K562 (cell line): ENCODE measurements at regions of chr3 and their contacts with region 1.

Region 1: DNA sequence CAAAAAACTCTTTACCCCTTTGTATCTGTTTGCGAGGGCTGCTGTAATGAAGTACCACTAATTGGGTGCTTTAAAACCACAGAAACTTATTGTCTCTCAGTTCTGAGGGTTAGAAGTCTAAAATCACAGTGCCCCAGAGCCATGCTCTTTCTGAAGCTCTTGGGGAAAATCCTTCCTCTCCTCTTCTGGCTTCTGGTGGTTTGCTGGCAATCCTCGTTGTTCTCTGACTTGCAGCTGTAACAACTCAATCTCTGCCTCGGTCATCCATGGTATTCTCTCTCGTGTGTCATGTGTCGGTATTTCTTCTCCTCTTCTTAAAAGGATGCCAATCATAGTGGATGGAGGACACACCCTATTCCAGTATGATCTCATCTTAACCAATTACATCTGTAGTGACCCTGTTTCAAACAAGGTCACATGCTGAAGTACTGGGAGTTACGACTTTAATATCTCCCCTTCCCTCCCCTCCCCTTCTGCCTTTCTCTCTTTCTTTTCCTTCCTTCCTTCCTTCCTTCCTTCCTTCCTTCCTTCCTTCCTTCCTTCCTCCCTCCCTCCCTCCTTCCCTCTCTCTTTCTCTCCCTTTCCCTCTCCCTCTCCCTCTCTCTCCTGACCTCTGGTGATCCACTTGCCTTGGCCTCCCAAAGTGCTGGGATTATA is 6.5 kb upstream of the ARL8B start:
- DNase-seq: no peak
- ATAC-seq: peak; percentile 76
- H3K4me3 ChIP-seq: no peak overlapping the region
- H3K27ac ChIP-seq: no peak overlapping the region
- H3K4me1 ChIP-seq: peaks cover 0 to 3% of the 10 kb centered on the region in 2 experiments; a peak in 2 of 5 replicates
- H3K27me3 ChIP-seq: no peaks in the 10 kb centered on the region
- CTCF ChIP-seq: no peak
- EP300 ChIP-seq: no peak
- POLR2A ChIP-seq: no peak
- RAD21 ChIP-seq: no peak

Region 2: DNA sequence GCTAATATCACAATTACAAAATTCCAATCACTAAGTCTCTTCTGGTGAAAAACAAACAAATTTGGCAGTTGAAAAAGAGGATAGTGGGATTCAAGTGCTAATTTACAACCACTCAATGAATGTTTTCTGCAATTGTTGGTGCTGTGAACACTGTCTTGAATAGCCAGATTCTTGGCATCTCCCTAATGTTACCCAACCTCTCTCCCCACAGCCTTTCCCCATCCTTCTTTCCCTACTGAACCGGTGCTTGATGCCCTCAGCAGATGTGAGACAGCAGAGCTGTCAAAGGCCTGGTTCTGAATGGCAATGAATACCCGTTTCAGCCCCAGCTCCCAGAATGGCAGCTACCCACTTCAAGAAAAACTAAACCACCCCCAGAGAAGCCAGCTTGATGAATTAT is 158.9 kb before region 1 on chr3:
- CTCF ChIA-PET with region 1: no interaction called
- POLR2A ChIA-PET with region 1: no interaction called
- in situ Hi-C with region 1: no loop called
- intact Hi-C with region 1: no loop called
- DNase-seq: no peak
- ATAC-seq: no peak
- H3K4me3 ChIP-seq: no peak overlapping the region
- H3K27ac ChIP-seq: no peak overlapping the region
- H3K4me1 ChIP-seq: no peaks in the 10 kb centered on the region
- H3K27me3 ChIP-seq: no peaks in the 10 kb centered on the region
- CTCF ChIP-seq: no peak
- EP300 ChIP-seq: no peak
- POLR2A ChIP-seq: no peak
- RAD21 ChIP-seq: no peak

Region 3: DNA sequence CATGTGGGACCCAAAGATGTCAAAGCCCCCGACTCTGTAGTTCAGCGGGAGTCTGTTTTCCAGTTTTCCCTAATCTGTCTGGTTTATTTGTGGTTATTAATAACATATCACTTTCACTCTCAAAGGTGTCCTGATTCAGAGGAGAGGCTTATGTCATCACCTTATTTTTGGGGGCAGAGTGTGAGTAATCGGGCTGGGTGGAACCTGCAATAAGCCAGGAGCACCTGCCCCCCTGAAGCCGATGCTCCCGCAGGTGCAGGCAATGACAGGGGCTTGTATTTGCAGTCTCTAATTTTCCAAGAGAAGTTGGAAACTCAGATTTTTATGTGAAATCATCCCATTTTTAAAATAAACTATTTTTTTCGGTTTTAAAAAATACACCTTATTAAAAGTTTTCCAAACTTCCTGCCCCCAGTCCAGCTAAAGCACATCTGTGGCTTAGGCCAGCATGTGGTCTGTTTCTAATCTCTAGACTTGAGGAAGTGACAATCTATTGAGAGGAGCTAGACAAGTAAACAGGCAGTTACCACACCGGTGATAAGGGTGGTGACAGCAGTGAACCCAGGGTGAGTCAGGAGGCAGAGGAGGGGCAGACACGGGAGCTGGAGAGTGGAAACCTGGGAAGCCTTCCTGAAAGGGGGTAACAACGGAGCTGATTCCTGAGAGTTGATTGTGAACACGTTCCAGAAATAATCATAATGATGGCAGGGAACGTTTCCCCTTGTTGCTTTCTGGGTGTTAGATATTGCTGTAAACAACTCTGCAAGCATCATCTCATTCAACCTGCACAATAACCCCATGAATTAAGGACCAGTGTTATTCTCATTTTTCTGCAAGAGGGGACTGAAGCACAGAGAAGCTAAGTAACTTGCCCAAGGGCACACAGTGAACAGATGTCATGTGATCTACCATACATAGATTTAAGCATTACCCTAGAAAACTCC is 99.1 kb before region 1 on chr3:
- CTCF ChIA-PET with region 1: no interaction called
- POLR2A ChIA-PET with region 1: no interaction called
- in situ Hi-C with region 1: no loop called
- intact Hi-C with region 1: no loop called
- DNase-seq: peak; percentile 79 to 94 (median 86)
- ATAC-seq: peak; percentile 75
- H3K4me3 ChIP-seq: no peak overlapping the region
- H3K27ac ChIP-seq: peak overlapping the region; percentile 61
- H3K4me1 ChIP-seq: peaks cover 88 to 90% of the 10 kb centered on the region in 2 experiments
- H3K27me3 ChIP-seq: no peaks in the 10 kb centered on the region; a peak in 1 of 5 replicates
- CTCF ChIP-seq: no peak; a peak in 1 of 6 replicates
- EP300 ChIP-seq: peak; percentile 100
- POLR2A ChIP-seq: no peak
- RAD21 ChIP-seq: peak; percentile 25 to 36; a peak in 2 of 4 replicates

Region 4: DNA sequence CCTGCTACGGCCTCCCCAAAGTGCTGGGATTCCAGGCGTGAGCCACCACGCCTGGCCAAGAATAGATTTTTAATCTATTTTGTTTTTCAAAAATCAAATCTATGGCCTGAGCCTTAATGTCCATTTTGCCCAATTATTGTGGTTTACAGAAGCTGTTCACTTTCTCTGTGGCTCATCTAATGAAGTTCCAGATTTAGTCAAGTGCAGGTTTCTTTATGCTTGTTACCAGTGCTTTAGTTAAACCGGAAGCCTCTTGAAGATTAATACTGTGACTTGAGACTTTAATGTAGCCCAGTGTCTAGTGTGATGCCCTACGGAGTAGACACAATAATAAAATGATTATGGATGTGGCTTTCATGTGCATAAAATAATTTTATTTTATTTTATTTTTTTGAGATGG is 55.3 kb after region 1 on chr3:
- CTCF ChIA-PET with region 1: no interaction called
- POLR2A ChIA-PET with region 1: no interaction called
- in situ Hi-C with region 1: no loop called
- intact Hi-C with region 1: no loop called
- DNase-seq: no peak
- ATAC-seq: no peak
- H3K4me3 ChIP-seq: no peak overlapping the region
- H3K27ac ChIP-seq: no peak overlapping the region
- H3K4me1 ChIP-seq: peaks cover 0 to 17% of the 10 kb centered on the region in 2 experiments; a peak in 3 of 5 replicates
- H3K27me3 ChIP-seq: no peaks in the 10 kb centered on the region
- CTCF ChIP-seq: no peak
- EP300 ChIP-seq: no peak
- POLR2A ChIP-seq: no peak
- RAD21 ChIP-seq: no peak

Region 5: GRCh38 chr3:5918626-5919025 is 803.0 kb after region 1 on chr3:
- CTCF ChIA-PET with region 1: no interaction called
- POLR2A ChIA-PET with region 1: no interaction called
- in situ Hi-C with region 1: loop called (anchors 5 kb)
- intact Hi-C with region 1: no loop called
- DNase-seq: no peak
- ATAC-seq: no peak
- H3K4me3 ChIP-seq: no peak overlapping the region
- H3K27ac ChIP-seq: no peak overlapping the region
- H3K4me1 ChIP-seq: no peaks in the 10 kb centered on the region
- H3K27me3 ChIP-seq: no peaks in the 10 kb centered on the region
- CTCF ChIP-seq: no peak
- EP300 ChIP-seq: no peak
- POLR2A ChIP-seq: no peak
- RAD21 ChIP-seq: no peak